Left cardiac atrium (tissue), 4 donors: ENCODE measurements at regions of chr16 and their contacts with region 1.

Region 1: DNA sequence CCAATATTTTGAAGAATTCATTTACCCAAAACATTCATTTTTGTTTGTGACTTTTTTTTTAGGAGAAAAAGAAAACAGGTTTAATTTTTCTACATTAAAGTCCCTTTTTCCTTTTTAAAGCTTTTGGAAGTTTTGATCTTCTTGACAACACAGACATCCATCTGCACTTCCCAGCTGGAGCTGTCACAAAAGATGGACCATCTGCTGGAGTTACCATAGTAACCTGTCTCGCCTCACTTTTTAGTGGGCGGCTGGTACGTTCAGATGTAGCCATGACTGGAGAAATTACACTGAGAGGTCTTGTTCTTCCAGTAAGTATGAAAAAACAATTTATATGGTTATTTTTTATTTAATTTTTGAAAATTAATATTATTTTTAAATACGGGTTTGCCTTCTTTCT is 37.2 kb downstream of the SIAH1 start:
- DNase-seq: no peak
- ATAC-seq: no peak

Region 2: GRCh38 chr16:48310908-48311641 is 36.9 kb before region 1 on chr16:
- intact Hi-C with region 1: loop called in 1 of 2 experiments (anchors 2 kb)
- DNase-seq: no peak
- ATAC-seq: no peak

Region 3: GRCh38 chr16:48526058-48526957 is 178.3 kb after region 1 on chr16:
- intact Hi-C with region 1: no loop called
- DNase-seq: no peak
- ATAC-seq: peak in 1 of 2 donors; percentile 44